ENCODE measurements at regions of chr9 and their contacts with region 1.

Region 1: GRCh38 chr9:113682297-113682771 is 193.8 kb upstream of the ZNF618 start:
- DNase-seq: peak in 1 of 2 donors; percentile 38
- ATAC-seq: peak in 1 of 2 donors; percentile 56
- H3K4me3 ChIP-seq: no peak overlapping the region
- H3K27ac ChIP-seq: no peak overlapping the region
- H3K4me1 ChIP-seq: no peaks in the 10 kb centered on the region
- H3K27me3 ChIP-seq: peaks cover 4 to 6% (median 5%) of the 10 kb centered on the region in 3 donors
- CTCF ChIP-seq: peak; percentile 50 to 88 (median 69)
- POLR2A ChIP-seq: no peak

Region 2: DNA sequence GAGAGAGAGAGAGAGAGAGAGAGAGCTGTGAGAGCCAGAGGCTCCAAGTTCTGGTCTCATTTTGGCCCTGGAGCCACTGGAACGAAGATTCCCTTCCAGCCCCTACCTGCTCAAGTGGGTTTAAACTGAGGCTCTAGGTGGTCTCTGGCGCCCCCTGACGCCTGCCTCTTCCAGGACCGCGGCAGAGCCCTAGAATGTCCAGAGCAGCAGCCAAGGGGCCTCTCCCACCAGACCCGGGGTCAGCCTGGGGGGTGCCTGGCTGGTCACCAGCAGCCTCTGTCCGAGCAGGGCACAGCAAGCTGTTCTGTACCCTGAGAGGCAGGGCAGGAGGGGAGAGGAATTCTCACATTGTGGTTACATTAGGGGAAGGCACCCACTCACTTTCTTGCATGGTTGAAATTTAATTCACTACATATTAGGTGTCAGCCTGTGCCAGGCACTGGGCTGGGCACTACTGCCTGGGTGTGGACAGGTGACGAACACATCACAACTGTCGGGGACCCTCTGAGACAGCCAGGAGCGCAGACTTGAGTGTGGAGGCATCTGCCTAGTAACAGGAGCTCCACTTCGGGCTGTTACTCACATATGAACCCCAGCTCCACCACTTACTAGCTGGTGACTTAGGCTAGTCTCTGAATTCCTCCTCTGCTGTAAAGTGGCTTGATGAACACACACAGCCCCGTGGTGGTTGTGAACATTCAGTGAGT is 351.2 kb after region 1 on chr9:
- in situ Hi-C with region 1: loop called in 1 of 4 experiments (anchors 25 kb)
- intact Hi-C with region 1: loop called (anchors 10 kb)
- DNase-seq: no peak
- ATAC-seq: no peak
- H3K4me3 ChIP-seq: no peak overlapping the region
- H3K27ac ChIP-seq: no peak overlapping the region
- H3K4me1 ChIP-seq: no peaks in the 10 kb centered on the region
- H3K27me3 ChIP-seq: no peaks in the 10 kb centered on the region
- CTCF ChIP-seq: peak; percentile 26 to 65 (median 60)
- POLR2A ChIP-seq: no peak

Measured in gastrocnemius medialis (tissue), 4 donors.